ENCODE measurements at regions of chr19 and their contacts with region 1.

Region 1: GRCh38 chr19:47790398-47790814 is 11.9 kb downstream of the SELENOW start:
- DNase-seq: peak; percentile 65
- H3K4me3 Mint-ChIP-seq: no peak overlapping the region
- H3K27ac Mint-ChIP-seq: no peak overlapping the region
- H3K4me1 Mint-ChIP-seq: peaks cover 5% of the 10 kb centered on the region
- H3K27me3 Mint-ChIP-seq: no peaks in the 10 kb centered on the region

Region 2: DNA sequence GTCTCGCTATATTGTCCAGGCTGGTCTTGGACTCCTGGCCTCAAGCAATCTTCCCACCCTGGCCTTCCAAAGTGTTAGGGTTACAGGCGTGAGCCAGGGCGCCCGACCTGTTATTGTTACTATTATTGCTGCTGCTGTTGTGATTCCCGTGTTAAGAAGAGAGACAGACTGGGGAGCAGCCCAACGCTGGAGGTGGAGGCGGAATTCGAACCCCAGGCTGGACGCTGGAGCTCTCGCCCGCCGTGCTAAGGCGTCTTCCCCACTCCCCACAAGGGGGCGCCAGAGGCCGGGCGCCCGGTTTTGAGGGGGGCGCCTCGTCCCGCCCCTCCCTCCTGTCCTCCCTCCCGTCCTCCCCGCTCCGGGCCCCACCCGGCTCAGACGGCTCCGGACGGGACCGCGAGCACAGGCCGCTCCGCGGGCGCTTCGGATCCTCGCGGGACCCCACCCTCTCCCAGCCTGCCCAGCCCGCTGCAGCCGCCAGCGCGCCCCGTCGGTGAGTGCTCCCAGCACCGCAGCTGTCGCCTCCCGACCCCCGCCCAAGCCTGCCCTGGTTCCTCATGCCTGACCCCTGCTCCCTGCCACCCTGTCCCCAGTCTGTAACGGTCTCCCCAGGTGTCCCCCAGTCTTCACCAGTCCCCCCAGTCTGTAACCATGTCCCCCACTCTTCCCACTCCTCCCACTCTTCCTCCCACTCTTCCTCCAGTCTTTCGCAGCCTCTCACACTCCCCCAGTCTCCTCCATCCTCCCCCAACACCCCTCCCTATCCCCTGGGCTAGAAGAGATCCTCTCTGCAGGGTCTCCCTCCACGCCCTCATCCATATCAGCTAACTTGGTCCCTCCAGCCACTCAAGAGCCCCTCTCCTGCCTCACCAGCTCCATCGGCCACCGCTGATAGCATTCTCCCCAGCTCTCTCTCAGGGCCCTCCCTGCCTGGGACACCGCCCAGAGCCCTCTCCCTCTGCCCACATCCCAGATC is 77.1 kb before region 1 on chr19 and contains the start of gene EHD2:
- intact Hi-C with region 1: loop called (anchors 1 kb)
- DNase-seq: peak; percentile 9
- H3K4me3 Mint-ChIP-seq: no peak within 1 kb of the TSS
- H3K27ac Mint-ChIP-seq: no peak within 1 kb of the TSS
- H3K4me1 Mint-ChIP-seq: no peaks in the 10 kb centered on the region
- H3K27me3 Mint-ChIP-seq: peaks cover 21% of the 10 kb centered on the region
- total RNA-seq, gene EHD2: 0.29 and 0.54 TPM in 2 replicates

Region 3: GRCh38 chr19:47765523-47766358 is 24.7 kb before region 1 on chr19:
- intact Hi-C with region 1: loop called (anchors 1 kb)
- DNase-seq: no peak
- H3K4me3 Mint-ChIP-seq: no peak overlapping the region
- H3K27ac Mint-ChIP-seq: no peak overlapping the region
- H3K4me1 Mint-ChIP-seq: no peaks in the 10 kb centered on the region
- H3K27me3 Mint-ChIP-seq: no peaks in the 10 kb centered on the region

Region 4: GRCh38 chr19:47824396-47824795 is 34.0 kb after region 1 on chr19:
- intact Hi-C with region 1: no loop called
- DNase-seq: no peak
- H3K4me3 Mint-ChIP-seq: no peak overlapping the region
- H3K27ac Mint-ChIP-seq: no peak overlapping the region
- H3K4me1 Mint-ChIP-seq: no peaks in the 10 kb centered on the region
- H3K27me3 Mint-ChIP-seq: peaks cover 10% of the 10 kb centered on the region

Region 5: GRCh38 chr19:47839913-47840312 is 49.5 kb after region 1 on chr19:
- intact Hi-C with region 1: no loop called
- DNase-seq: no peak
- H3K4me3 Mint-ChIP-seq: no peak overlapping the region
- H3K27ac Mint-ChIP-seq: no peak overlapping the region
- H3K4me1 Mint-ChIP-seq: no peaks in the 10 kb centered on the region
- H3K27me3 Mint-ChIP-seq: peaks cover 3% of the 10 kb centered on the region

Region 6: DNA sequence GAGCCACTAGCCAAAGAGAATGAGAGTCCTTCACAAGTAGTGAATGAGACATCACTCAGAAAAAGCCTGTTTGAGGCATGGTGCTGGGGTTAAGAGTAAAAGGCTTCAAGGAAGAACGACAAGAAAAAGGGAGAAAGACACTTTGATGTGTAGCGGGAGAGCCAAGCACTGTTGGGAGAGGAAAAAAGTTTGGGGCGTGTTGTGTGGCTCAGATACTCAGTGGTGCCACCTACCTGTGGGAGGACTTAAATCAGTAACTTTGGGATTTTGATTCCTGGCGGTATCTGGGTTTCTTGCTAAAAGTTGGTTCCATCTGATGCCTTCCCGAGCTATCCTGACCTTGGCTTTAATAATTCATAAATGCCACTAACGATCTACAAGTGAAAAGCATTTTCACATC is 216.4 kb after region 1 on chr19:
- intact Hi-C with region 1: no loop called
- DNase-seq: no peak
- H3K4me3 Mint-ChIP-seq: no peak overlapping the region
- H3K27ac Mint-ChIP-seq: no peak overlapping the region
- H3K4me1 Mint-ChIP-seq: no peaks in the 10 kb centered on the region
- H3K27me3 Mint-ChIP-seq: no peaks in the 10 kb centered on the region